Activated T-helper 2 cell treated with anti-CD3 and anti-CD28 coated beads, Interferon-gamma antibody, Interleukin-2, Interleukin-4, amounts not matched to agents 10 μg/mL and 5 μg/mL and 100 μg/mL, durations not matched to agents 14 hours and 24 hours and 36 hours (primary cell): ENCODE measurements at regions of chrX and their contacts with region 1.

Region 1: GRCh38 chrX:154478728-154479622 is at the start of gene LAGE3:
- DNase-seq: peak; percentile 92
- H3K4me3 Mint-ChIP-seq: peak within 1 kb of the TSS; percentile 91
- H3K27ac Mint-ChIP-seq: peak within 1 kb of the TSS; percentile 94
- H3K4me1 Mint-ChIP-seq: peaks cover 14% of the 10 kb centered on the region
- H3K27me3 Mint-ChIP-seq: no peaks in the 10 kb centered on the region
- total RNA-seq, gene LAGE3: 49.4 and 51.7 TPM in 2 replicates

Region 2: GRCh38 chrX:154142950-154143745 is 335.8 kb before region 1 on chrX:
- intact Hi-C with region 1: no loop called
- DNase-seq: no peak
- H3K4me3 Mint-ChIP-seq: no peak overlapping the region
- H3K27ac Mint-ChIP-seq: no peak overlapping the region
- H3K4me1 Mint-ChIP-seq: no peaks in the 10 kb centered on the region
- H3K27me3 Mint-ChIP-seq: peaks cover 7% of the 10 kb centered on the region

Region 3: GRCh38 chrX:154443992-154444754 is 34.8 kb before region 1 on chrX and contains the start of gene FAM50A:
- intact Hi-C with region 1: loop called (anchors 5 kb)
- DNase-seq: peak; percentile 64
- H3K4me3 Mint-ChIP-seq: peak within 1 kb of the TSS; percentile 75
- H3K27ac Mint-ChIP-seq: peak within 1 kb of the TSS; percentile 50
- H3K4me1 Mint-ChIP-seq: peaks cover 3% of the 10 kb centered on the region
- H3K27me3 Mint-ChIP-seq: no peaks in the 10 kb centered on the region
- total RNA-seq, gene FAM50A: 79.6 and 84.1 TPM in 2 replicates

Region 4: DNA sequence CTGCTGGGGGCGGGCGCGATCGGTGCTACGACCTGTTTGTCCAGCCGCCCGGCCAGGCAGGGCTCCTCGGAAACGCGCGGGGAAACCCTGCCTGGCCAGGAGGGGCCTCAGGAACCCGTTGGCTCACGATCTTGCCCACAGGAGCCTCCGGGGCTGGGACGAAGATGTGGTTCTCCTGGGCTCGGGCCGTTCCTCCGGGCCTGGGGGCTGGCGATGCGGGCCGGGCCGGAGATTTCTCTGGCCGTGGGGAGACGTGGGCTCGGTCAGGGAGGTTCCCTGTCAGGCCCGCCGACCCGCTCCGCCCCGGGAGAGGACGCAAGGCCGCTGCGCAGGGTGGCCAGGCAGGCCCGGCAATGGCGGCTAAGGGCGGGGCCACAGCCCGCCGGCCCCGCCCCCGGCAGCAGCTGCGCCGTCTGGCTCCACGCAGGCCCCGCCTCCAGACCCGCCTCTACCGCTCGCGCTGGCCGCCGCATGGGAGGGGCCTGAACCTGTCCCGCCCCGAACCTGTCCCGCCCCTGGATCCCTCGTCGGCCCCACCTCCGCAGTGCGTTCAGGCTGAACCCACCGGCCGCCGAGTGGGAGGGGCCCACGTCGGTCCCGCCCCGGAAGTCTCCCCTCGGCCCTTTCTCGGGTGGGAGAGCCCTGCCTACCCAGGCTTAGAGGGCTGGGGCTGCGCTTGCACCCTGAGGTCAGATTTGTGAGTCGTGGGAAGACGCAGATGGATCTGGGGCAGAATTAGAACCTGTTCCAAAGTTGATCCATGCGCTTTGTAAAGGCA is 37.1 kb after region 1 on chrX and contains the start of gene FAM3A:
- intact Hi-C with region 1: loop called (anchors 5 kb)
- DNase-seq: peak; percentile 84
- H3K4me3 Mint-ChIP-seq: peak within 1 kb of the TSS; percentile 85
- H3K27ac Mint-ChIP-seq: peak within 1 kb of the TSS; percentile 86
- H3K4me1 Mint-ChIP-seq: peaks cover 14% of the 10 kb centered on the region
- H3K27me3 Mint-ChIP-seq: no peaks in the 10 kb centered on the region
- total RNA-seq, gene FAM3A: 39.2 and 39.8 TPM in 2 replicates

Region 5: DNA sequence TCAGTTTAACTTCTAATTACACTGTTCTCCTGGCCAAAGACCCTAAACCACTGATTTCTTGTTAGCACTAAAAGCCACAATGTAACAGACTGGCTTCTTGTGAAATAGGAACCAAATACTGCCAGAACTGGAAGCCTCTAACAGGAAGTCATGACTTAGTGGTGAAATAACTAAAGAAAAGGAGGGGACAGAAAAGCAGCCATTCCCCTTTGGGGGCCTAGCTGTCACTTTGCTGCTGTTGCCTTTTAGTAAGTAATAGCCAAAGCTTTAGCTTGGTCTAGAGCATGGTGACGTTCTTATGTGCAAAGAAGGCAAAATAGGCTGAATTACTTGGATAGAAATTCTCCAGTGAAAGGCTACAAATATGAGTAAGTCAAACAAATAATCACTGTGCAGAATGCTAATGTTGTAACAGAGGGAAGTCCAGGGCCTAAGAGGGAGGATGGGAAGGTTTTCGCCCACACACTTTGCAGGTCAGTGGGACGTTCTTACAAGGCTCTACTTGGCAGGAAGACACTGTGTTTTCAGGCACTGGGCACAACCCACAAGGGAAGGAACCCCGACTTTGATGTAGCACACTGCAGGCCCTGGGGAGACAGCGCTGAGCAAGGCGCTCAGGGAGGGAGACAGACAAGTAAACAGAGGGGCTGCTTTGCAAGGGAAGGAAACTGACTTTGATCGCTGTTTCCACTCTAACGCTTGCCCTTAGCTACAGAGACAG is 255.2 kb after region 1 on chrX:
- intact Hi-C with region 1: no loop called
- DNase-seq: peak; percentile 11
- H3K4me3 Mint-ChIP-seq: peak overlapping the region; percentile 64
- H3K27ac Mint-ChIP-seq: peak overlapping the region; percentile 85
- H3K4me1 Mint-ChIP-seq: peaks cover 86% of the 10 kb centered on the region
- H3K27me3 Mint-ChIP-seq: no peaks in the 10 kb centered on the region